ENCODE measurements at regions of chr12 and their contacts with region 1.

Region 1: DNA sequence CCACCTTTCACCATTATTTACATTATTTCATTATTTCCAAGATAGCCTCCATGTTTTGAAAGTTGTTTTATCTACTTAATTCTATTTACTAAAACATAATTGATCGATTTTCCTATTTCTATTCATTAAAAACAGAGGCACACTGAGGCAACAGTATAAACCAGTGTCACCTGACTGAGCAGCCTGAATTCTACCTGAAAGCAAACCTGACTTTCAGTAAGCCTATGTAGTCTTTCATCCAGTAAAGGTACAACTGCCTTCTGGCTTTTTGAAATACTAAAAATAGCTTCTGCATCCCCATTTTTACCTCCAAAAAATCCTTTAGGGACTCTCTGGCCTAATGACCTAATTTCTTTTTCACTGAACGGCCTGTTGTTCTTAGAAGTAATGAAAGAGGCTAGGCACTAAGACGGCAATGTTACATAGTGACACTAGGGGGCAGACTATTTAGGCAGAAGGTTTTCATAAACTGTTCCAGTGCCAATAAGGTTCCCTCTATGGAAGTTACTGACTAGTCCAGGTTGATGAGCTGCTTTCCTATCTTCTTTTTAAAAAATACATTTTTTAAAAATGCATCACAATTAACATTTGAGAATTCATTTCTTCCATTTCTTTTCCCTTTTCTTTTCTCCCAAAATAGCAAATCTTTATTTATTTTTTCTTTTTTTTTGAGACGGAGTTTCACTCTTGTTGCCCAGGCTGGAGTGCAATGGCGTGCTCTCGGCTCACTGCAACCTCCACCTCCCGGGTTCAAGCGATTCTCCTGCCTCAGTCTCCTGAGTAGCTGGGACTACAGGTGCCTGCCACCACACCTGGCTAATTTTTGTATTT is 17.5 kb downstream of the ANAPC5 start:
- DNase-seq: peak in 4 of 5 donors; percentile 52 to 58 (median 56)
- H3K4me3 ChIP-seq: no peak overlapping the region
- H3K4me3 Mint-ChIP-seq: no peak overlapping the region
- H3K27ac ChIP-seq: peak overlapping the region; percentile 17
- H3K27ac Mint-ChIP-seq: peak overlapping the region in 6 of 7 donors; percentile 36 to 89 (median 60)
- H3K4me1 ChIP-seq: peaks cover 4% of the 10 kb centered on the region
- H3K4me1 Mint-ChIP-seq: peaks cover 2 to 6% (median 4%) of the 10 kb centered on the region in 4 donors
- H3K27me3 ChIP-seq: no peaks in the 10 kb centered on the region
- H3K27me3 Mint-ChIP-seq: no peaks in the 10 kb centered on the region

Region 2: DNA sequence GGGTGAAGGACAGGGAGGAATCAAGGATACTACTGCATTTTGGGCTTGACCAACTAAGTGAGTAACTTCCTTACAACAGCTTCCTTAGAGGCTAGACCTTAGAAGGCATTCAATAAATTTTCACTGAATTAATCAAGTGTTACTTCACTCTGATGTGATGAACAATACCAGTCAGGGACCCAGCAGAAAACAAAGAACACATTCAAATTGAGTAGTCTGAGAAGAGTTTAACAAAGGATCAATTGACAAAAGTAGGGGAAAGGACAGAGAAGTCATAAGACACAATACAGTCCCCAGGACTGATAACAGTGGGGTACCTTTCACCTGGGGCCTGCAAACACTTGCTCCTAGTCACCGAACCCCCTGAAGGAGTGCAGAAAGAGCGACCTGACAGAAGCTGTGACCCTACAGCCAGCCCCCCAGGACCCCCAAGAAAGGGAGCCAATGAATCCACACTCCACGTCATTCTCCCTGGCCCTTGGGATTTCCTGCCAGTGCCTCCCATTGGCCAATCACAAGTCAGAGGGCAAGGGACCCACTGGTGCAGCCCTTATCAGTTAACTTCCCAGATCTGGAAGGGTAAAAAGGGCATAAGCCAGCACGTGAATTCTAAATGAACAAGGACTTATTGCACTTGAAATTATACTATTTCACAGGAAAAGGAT is 10.6 kb after region 1 on chr12:
- CTCF ChIA-PET with region 1: interaction called, 23 read pairs
- POLR2A ChIA-PET with region 1: no interaction called
- intact Hi-C with region 1: no loop called
- DNase-seq: no peak
- H3K4me3 ChIP-seq: no peak overlapping the region
- H3K4me3 Mint-ChIP-seq: no peak overlapping the region
- H3K27ac ChIP-seq: no peak overlapping the region
- H3K27ac Mint-ChIP-seq: peak overlapping the region in 6 of 7 donors; percentile 3 to 77 (median 40)
- H3K4me1 ChIP-seq: peaks cover 6% of the 10 kb centered on the region
- H3K4me1 Mint-ChIP-seq: peaks cover 13 to 32% (median 18%) of the 10 kb centered on the region in 4 donors
- H3K27me3 ChIP-seq: no peaks in the 10 kb centered on the region
- H3K27me3 Mint-ChIP-seq: no peaks in the 10 kb centered on the region